ENCODE measurements at regions of chr6 and their contacts with region 1.

Region 1: GRCh38 chr6:133973109-133973971 is 20.3 kb downstream of the TBPL1 start:
- DNase-seq: no peak
- H3K4me3 ChIP-seq: no peak overlapping the region
- H3K27ac ChIP-seq: peak overlapping the region in 51 of 59 donors; percentile 3 to 81 (median 60)
- H3K27me3 ChIP-seq: no peaks in the 10 kb centered on the region
- CTCF ChIP-seq: peak; percentile 73 to 97 (median 87)

Region 2: DNA sequence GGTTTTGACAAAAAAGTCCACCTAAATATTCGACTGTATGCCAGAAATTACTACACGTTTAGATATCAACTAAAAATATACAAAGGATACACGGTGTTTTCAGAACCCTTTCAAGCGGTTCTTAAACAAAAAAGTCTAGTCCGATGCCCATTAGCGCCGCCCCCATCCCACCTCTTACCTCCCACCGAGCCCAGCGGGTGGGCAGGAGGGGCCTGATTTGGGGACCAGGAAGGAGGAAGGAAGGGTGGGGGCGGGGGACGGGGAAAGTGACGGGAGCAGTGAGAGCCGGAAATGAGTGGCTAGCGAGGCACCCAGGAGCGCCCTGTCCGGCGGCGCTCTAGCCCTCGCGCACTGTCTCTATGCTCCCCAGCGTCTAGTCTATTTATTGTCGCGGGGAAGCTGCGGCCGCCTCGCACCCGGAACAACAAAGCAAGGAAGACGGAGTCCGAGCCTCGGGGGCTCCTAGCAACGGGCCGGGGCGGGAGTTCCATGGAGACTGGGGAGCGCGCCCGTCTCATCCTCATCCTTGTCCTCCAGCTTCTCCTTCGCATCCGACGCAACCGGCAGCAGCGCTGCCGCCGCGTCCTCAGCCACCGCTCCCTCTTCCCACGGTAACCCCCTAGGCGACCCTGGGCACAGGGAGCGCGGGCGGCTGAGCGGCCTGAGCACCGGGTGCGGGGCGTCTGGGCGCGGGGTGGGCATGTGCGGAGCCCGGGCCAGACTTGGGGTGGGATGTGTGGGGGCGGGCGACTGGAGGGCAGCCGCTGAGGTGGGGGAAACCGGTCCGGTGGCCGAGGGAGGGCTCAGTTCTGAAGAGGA is 20.3 kb before region 1 on chr6 and contains the start of gene TBPL1:
- intact Hi-C with region 1: loop called in 1 of 2 experiments (anchors 2 kb)
- DNase-seq: peak; percentile 90 to 97 (median 95)
- H3K4me3 ChIP-seq: peak within 1 kb of the TSS; percentile 47 to 98 (median 88)
- H3K27ac ChIP-seq: peak within 1 kb of the TSS; percentile 84 to 99 (median 96)
- H3K27me3 ChIP-seq: no peaks in the 10 kb centered on the region
- CTCF ChIP-seq: peak in 31 of 56 donors; percentile 7 to 59 (median 35)
- total RNA-seq, gene TBPL1: 23.9 to 70.4 (median 49.9) TPM

Region 3: GRCh38 chr6:134145786-134146185 is 172.4 kb after region 1 on chr6:
- intact Hi-C with region 1: no loop called
- DNase-seq: no peak
- H3K4me3 ChIP-seq: no peak overlapping the region
- H3K27ac ChIP-seq: no peak overlapping the region
- H3K27me3 ChIP-seq: no peaks in the 10 kb centered on the region
- CTCF ChIP-seq: no peak

Region 4: GRCh38 chr6:134619789-134620188 is 646.4 kb after region 1 on chr6:
- intact Hi-C with region 1: no loop called
- DNase-seq: no peak
- H3K4me3 ChIP-seq: no peak overlapping the region
- H3K27ac ChIP-seq: peak overlapping the region in 3 of 59 donors; percentile 6 to 37 (median 24)
- H3K27me3 ChIP-seq: no peaks in the 10 kb centered on the region
- CTCF ChIP-seq: no peak

Measured in dorsolateral prefrontal cortex (tissue), 120 donors.